ENCODE measurements at regions of chr6 and their contacts with region 1.

Region 1: GRCh38 chr6:160455541-160456213 is 107.5 kb downstream of the SLC22A3 start:
- DNase-seq: peak; percentile 25 to 78 (median 58)
- ATAC-seq: peak; percentile 77 to 98 (median 95)
- H3K4me3 ChIP-seq: no peak overlapping the region
- H3K27ac ChIP-seq: no peak overlapping the region
- H3K4me1 ChIP-seq: peaks cover 0 to 3% (median 0%) of the 10 kb centered on the region in 3 donors
- H3K27me3 ChIP-seq: no peaks in the 10 kb centered on the region
- CTCF ChIP-seq: peak; percentile 92 to 95 (median 95)

Region 2: GRCh38 chr6:159862103-159862502 is 593.6 kb before region 1 on chr6:
- intact Hi-C with region 1: loop called in 2 of 3 experiments (anchors 10 kb)
- DNase-seq: no peak
- ATAC-seq: no peak
- H3K4me3 ChIP-seq: no peak overlapping the region
- H3K27ac ChIP-seq: no peak overlapping the region
- H3K4me1 ChIP-seq: no peaks in the 10 kb centered on the region
- H3K27me3 ChIP-seq: no peaks in the 10 kb centered on the region
- CTCF ChIP-seq: no peak

Region 3: GRCh38 chr6:160088069-160088783 is 367.5 kb before region 1 on chr6:
- intact Hi-C with region 1: loop called in 1 of 3 experiments (anchors 10 kb)
- DNase-seq: peak in 4 of 6 donors; percentile 18 to 65 (median 35)
- ATAC-seq: peak in 3 of 4 donors; percentile 80 to 82 (median 80)
- H3K4me3 ChIP-seq: no peak overlapping the region
- H3K27ac ChIP-seq: no peak overlapping the region
- H3K4me1 ChIP-seq: no peaks in the 10 kb centered on the region
- H3K27me3 ChIP-seq: no peaks in the 10 kb centered on the region
- CTCF ChIP-seq: peak in 2 of 4 donors; percentile 31 to 49

Region 4: DNA sequence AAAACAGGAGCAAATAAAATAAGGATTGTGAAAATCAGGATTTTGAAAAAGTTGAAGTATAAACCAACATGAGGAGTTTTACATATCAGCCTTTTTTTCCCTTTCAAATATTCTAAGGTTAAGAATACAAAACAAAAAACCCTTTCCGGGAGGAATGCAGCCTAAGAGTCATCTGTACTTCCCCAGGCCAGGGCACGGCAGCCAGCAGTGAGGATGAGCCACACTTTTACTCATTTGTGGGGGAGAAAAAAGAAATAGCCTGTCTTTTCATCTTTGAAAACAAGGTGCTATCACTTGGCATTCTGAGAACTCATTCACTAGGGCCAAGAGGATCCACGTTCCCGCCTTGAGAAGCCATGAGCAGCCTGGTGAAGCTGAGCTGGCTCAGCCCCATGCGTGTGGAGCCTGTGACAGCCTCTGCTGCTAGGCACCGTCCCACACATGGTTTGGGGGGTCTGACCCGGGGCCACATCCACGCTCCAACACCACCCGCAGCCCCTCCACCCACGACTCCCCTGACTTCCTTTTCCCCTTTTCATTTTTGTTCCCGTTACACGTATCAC is 322.8 kb before region 1 on chr6:
- intact Hi-C with region 1: loop called in 1 of 3 experiments (anchors 5 kb)
- DNase-seq: no peak
- ATAC-seq: no peak
- H3K4me3 ChIP-seq: no peak overlapping the region
- H3K27ac ChIP-seq: no peak overlapping the region
- H3K4me1 ChIP-seq: peaks cover 0 to 5% (median 3%) of the 10 kb centered on the region in 3 donors
- H3K27me3 ChIP-seq: no peaks in the 10 kb centered on the region
- CTCF ChIP-seq: no peak

Region 5: GRCh38 chr6:160534050-160534696 is 78.5 kb after region 1 on chr6:
- intact Hi-C with region 1: loop called in 1 of 3 experiments (anchors 2 kb)
- DNase-seq: peak; percentile 9 to 77 (median 52)
- ATAC-seq: peak; percentile 50 to 94 (median 88)
- H3K4me3 ChIP-seq: no peak overlapping the region
- H3K27ac ChIP-seq: no peak overlapping the region
- H3K4me1 ChIP-seq: no peaks in the 10 kb centered on the region
- H3K27me3 ChIP-seq: no peaks in the 10 kb centered on the region
- CTCF ChIP-seq: peak; percentile 90 to 91 (median 90)

Region 6: DNA sequence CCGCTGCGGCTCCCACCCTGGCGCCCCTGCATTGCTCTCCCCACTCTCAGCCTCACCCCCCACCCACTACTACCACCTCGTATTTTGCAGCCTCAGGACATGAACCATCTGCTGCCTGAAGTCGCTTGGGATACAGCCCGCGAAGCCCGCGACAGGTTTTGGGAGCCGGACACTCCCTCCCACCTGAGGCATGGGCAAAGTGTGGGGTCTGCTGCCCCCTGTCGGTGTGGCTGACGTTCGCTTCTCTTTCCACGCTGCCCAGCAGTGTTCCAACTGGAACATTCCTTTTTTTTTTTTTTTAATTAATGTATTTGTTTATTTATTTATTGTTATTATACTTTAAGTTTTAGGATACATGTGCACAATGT is 223.7 kb after region 1 on chr6:
- intact Hi-C with region 1: no loop called
- DNase-seq: peak; percentile 48 to 86 (median 72)
- ATAC-seq: peak; percentile 96 to 99 (median 98)
- H3K4me3 ChIP-seq: peak overlapping the region; percentile 23 to 57 (median 38)
- H3K27ac ChIP-seq: no peak overlapping the region
- H3K4me1 ChIP-seq: no peaks in the 10 kb centered on the region
- H3K27me3 ChIP-seq: no peaks in the 10 kb centered on the region
- CTCF ChIP-seq: peak; percentile 22 to 43 (median 35)

Region 7: DNA sequence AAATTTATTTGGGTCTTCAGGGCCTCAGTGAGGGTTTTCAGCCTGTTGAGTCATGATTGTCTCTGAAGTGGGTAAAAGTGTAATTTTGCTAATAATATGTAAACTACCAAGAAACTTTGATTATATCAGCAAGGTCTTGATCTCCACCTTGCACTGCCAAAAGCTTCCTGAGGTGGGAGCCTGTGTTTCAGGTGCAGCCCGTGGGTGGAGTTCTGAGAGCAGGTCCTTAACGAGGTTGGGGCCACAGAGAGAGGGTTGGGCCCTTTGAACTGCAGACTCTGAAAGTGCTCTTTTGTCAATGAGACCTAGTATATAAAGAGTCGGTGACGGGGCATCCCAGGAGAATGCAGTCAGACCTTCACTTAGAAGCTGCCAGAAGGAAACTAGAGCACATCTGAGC is 406.1 kb after region 1 on chr6:
- intact Hi-C with region 1: no loop called
- DNase-seq: no peak
- ATAC-seq: no peak
- H3K4me3 ChIP-seq: no peak overlapping the region
- H3K27ac ChIP-seq: no peak overlapping the region
- H3K4me1 ChIP-seq: no peaks in the 10 kb centered on the region
- H3K27me3 ChIP-seq: no peaks in the 10 kb centered on the region
- CTCF ChIP-seq: no peak

Measured in pancreas (tissue), 10 donors.